Prostate gland (tissue), 2 donors: ENCODE measurements at regions of chr14 and their contacts with region 1.

Region 1: GRCh38 chr14:60724137-60724619 is at the start of gene SIX4:
- DNase-seq: peak; percentile 94
- H3K4me3 ChIP-seq: peak within 1 kb of the TSS; percentile 78 to 88
- H3K27ac ChIP-seq: peak within 1 kb of the TSS; percentile 84 to 94
- H3K4me1 ChIP-seq: no peaks in the 10 kb centered on the region
- H3K27me3 ChIP-seq: no peaks in the 10 kb centered on the region
- CTCF ChIP-seq: no peak
- POLR2A ChIP-seq: peak; percentile 94
- total RNA-seq, gene SIX4: 17.6 to 21.3 TPM

Region 2: GRCh38 chr14:60008042-60008441 is 716.1 kb before region 1 on chr14:
- intact Hi-C with region 1: no loop called
- DNase-seq: no peak
- H3K4me3 ChIP-seq: no peak overlapping the region
- H3K27ac ChIP-seq: no peak overlapping the region
- H3K4me1 ChIP-seq: no peaks in the 10 kb centered on the region
- H3K27me3 ChIP-seq: no peaks in the 10 kb centered on the region
- CTCF ChIP-seq: no peak
- POLR2A ChIP-seq: no peak

Region 3: GRCh38 chr14:60091550-60092530 is 632.3 kb before region 1 on chr14 and contains the start of gene PCNX4:
- intact Hi-C with region 1: loop called (anchors 10 kb)
- DNase-seq: peak; percentile 98
- H3K4me3 ChIP-seq: peak within 1 kb of the TSS; percentile 55 to 70
- H3K27ac ChIP-seq: peak within 1 kb of the TSS; percentile 98 to 99
- H3K4me1 ChIP-seq: no peaks in the 10 kb centered on the region
- H3K27me3 ChIP-seq: no peaks in the 10 kb centered on the region
- CTCF ChIP-seq: peak in 1 of 4 experiments; percentile 6
- POLR2A ChIP-seq: peak; percentile 94
- total RNA-seq, gene PCNX4: 49.9 to 136 TPM

Region 4: GRCh38 chr14:60648934-60649874 is 75.0 kb before region 1 on chr14 and contains the start of gene SIX1:
- intact Hi-C with region 1: loop called (anchors 5 kb)
- DNase-seq: peak; percentile 90
- H3K4me3 ChIP-seq: peak within 1 kb of the TSS; percentile 46 to 76
- H3K27ac ChIP-seq: peak within 1 kb of the TSS; percentile 86 to 92
- H3K4me1 ChIP-seq: no peaks in the 10 kb centered on the region
- H3K27me3 ChIP-seq: no peaks in the 10 kb centered on the region
- CTCF ChIP-seq: peak in 2 of 4 experiments; percentile 19 to 32
- POLR2A ChIP-seq: peak; percentile 96
- total RNA-seq, gene SIX1: 23.5 to 25.0 TPM

Region 5: GRCh38 chr14:60980811-60981632 is 256.8 kb after region 1 on chr14 and contains the starts of genes SLC38A6 and TRMT5:
- intact Hi-C with region 1: loop called (anchors 5 kb)
- DNase-seq: peak; percentile 94
- H3K4me3 ChIP-seq: peak within 1 kb of the TSS; percentile 70 to 86
- H3K27ac ChIP-seq: peak within 1 kb of the TSS; percentile 85 to 86
- H3K4me1 ChIP-seq: no peaks in the 10 kb centered on the region
- H3K27me3 ChIP-seq: no peaks in the 10 kb centered on the region
- CTCF ChIP-seq: peak in 2 of 4 experiments; percentile 11 to 16
- POLR2A ChIP-seq: peak; percentile 62
- total RNA-seq, gene SLC38A6: 13.7 to 15.1 TPM
- total RNA-seq, gene TRMT5: 8.1 to 18.4 TPM